Naive thymus-derived CD4-positive, alpha-beta T cell (primary cell): ENCODE measurements at regions of chr7 and their contacts with region 1.

Region 1: DNA sequence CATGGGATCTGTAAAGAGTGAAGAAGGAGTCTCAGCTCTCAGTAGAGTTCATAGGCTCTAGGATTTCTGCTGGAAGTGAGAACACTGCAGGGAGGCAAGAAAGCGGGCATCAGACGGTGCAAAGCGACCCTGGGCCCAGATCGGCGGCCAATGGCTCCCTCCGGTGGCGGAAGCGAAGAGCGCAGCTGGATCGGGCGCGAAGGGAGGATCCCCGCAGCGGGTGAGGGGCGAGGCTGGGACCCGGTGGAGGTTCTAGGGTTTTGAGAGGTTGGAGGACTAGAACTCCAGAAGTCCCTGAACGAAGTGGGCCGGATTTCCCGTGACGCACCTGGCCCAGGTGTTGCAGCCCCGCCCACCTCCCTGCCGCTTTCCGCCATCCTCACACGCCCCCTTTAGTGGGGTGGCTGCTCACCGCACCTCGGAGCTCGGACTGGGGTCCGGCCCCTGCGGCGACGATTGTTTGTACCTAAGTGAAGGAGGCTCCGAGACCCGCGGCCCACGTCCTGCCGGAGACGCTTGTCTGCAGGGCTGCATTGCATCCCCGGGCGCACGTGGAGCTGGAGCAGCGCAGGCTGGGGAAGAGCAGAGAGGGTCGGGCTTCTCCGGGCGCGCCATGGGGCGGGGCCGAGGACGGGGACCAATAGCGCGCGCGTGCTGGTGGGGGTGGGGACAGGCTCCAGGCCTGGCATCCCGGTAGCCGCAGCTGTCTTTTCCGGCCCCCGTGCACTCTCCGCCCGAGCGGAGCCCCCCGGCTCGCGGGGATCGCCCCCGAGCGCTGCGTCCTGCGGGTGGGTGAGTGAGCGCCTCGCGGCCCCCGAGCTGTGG is at the start of gene SLC12A9:
- DNase-seq: peak; percentile 71 to 90 (median 85)
- ATAC-seq: peak; percentile 96
- H3K4me3 ChIP-seq: peak within 1 kb of the TSS; percentile 73
- H3K4me3 Mint-ChIP-seq: peak within 1 kb of the TSS; percentile 89 to 95 (median 92)
- H3K27ac ChIP-seq: peak within 1 kb of the TSS; percentile 76
- H3K27ac Mint-ChIP-seq: peak within 1 kb of the TSS; percentile 71 to 97 (median 90)
- H3K4me1 ChIP-seq: peaks cover 8 to 16% of the 10 kb centered on the region in 2 donors
- H3K4me1 Mint-ChIP-seq: peaks cover 0 to 31% (median 19%) of the 10 kb centered on the region in 7 donors
- H3K27me3 ChIP-seq: no peaks in the 10 kb centered on the region
- H3K27me3 Mint-ChIP-seq: no peaks in the 10 kb centered on the region
- total RNA-seq, gene SLC12A9: 50.4 to 78.6 (median 62.7) TPM

Region 2: GRCh38 chr7:99997545-99998137 is 854.6 kb before region 1 on chr7:
- CTCF ChIA-PET with region 1: no interaction called
- POLR2A ChIA-PET with region 1: no interaction called
- intact Hi-C with region 1: no loop called
- DNase-seq: peak; percentile 55 to 76 (median 72)
- ATAC-seq: peak; percentile 96
- H3K4me3 ChIP-seq: peak overlapping the region; percentile 43
- H3K4me3 Mint-ChIP-seq: peak overlapping the region; percentile 71 to 85 (median 76)
- H3K27ac ChIP-seq: peak overlapping the region; percentile 71
- H3K27ac Mint-ChIP-seq: peak overlapping the region; percentile 57 to 95 (median 87)
- H3K4me1 ChIP-seq: peaks cover 7 to 11% of the 10 kb centered on the region in 2 donors
- H3K4me1 Mint-ChIP-seq: peaks cover 7 to 21% (median 18%) of the 10 kb centered on the region in 7 donors
- H3K27me3 ChIP-seq: no peaks in the 10 kb centered on the region
- H3K27me3 Mint-ChIP-seq: peaks cover 0 to 3% (median 0%) of the 10 kb centered on the region in 5 donors

Region 3: GRCh38 chr7:100604028-100604975 is 248.0 kb before region 1 on chr7:
- CTCF ChIA-PET with region 1: no interaction called
- POLR2A ChIA-PET with region 1: no interaction called
- intact Hi-C with region 1: loop called in 1 of 2 experiments (anchors 2 kb)
- DNase-seq: peak in 8 of 9 donors; percentile 47 to 81 (median 59)
- ATAC-seq: peak; percentile 81
- H3K4me3 ChIP-seq: peak overlapping the region; percentile 70
- H3K4me3 Mint-ChIP-seq: peak overlapping the region; percentile 79 to 94 (median 87)
- H3K27ac ChIP-seq: peak overlapping the region; percentile 67
- H3K27ac Mint-ChIP-seq: peak overlapping the region; percentile 21 to 92 (median 84)
- H3K4me1 ChIP-seq: peaks cover 6 to 10% of the 10 kb centered on the region in 2 donors
- H3K4me1 Mint-ChIP-seq: peaks cover 7 to 35% (median 16%) of the 10 kb centered on the region in 7 donors
- H3K27me3 ChIP-seq: no peaks in the 10 kb centered on the region
- H3K27me3 Mint-ChIP-seq: peaks cover 0 to 15% (median 0%) of the 10 kb centered on the region in 5 donors

Region 4: GRCh38 chr7:100726996-100727761 is 125.1 kb before region 1 on chr7:
- CTCF ChIA-PET with region 1: no interaction called
- POLR2A ChIA-PET with region 1: no interaction called
- intact Hi-C with region 1: loop called in 1 of 2 experiments (anchors 1 kb)
- DNase-seq: no peak
- ATAC-seq: no peak
- H3K4me3 ChIP-seq: no peak overlapping the region
- H3K4me3 Mint-ChIP-seq: no peak overlapping the region
- H3K27ac ChIP-seq: no peak overlapping the region
- H3K27ac Mint-ChIP-seq: peak overlapping the region in 1 of 9 donors; percentile 22
- H3K4me1 ChIP-seq: no peaks in the 10 kb centered on the region
- H3K4me1 Mint-ChIP-seq: peaks cover 0 to 5% (median 0%) of the 10 kb centered on the region in 7 donors
- H3K27me3 ChIP-seq: peaks cover 0 to 4% of the 10 kb centered on the region in 2 donors
- H3K27me3 Mint-ChIP-seq: peaks cover 16 to 31% (median 21%) of the 10 kb centered on the region in 5 donors

Region 5: GRCh38 chr7:100837099-100837836 is 15.0 kb before region 1 on chr7:
- CTCF ChIA-PET with region 1: interaction called, 8 read pairs
- POLR2A ChIA-PET with region 1: interaction called, 3 read pairs
- intact Hi-C with region 1: loop called in 1 of 2 experiments (anchors 1 kb)
- DNase-seq: peak; percentile 42 to 65 (median 59)
- ATAC-seq: peak; percentile 97
- H3K4me3 ChIP-seq: peak overlapping the region; percentile 57
- H3K4me3 Mint-ChIP-seq: peak overlapping the region; percentile 80 to 90 (median 86)
- H3K27ac ChIP-seq: peak overlapping the region; percentile 59
- H3K27ac Mint-ChIP-seq: peak overlapping the region; percentile 64 to 92 (median 77)
- H3K4me1 ChIP-seq: no peaks in the 10 kb centered on the region
- H3K4me1 Mint-ChIP-seq: peaks cover 5 to 19% (median 16%) of the 10 kb centered on the region in 7 donors
- H3K27me3 ChIP-seq: no peaks in the 10 kb centered on the region
- H3K27me3 Mint-ChIP-seq: no peaks in the 10 kb centered on the region

Region 6: DNA sequence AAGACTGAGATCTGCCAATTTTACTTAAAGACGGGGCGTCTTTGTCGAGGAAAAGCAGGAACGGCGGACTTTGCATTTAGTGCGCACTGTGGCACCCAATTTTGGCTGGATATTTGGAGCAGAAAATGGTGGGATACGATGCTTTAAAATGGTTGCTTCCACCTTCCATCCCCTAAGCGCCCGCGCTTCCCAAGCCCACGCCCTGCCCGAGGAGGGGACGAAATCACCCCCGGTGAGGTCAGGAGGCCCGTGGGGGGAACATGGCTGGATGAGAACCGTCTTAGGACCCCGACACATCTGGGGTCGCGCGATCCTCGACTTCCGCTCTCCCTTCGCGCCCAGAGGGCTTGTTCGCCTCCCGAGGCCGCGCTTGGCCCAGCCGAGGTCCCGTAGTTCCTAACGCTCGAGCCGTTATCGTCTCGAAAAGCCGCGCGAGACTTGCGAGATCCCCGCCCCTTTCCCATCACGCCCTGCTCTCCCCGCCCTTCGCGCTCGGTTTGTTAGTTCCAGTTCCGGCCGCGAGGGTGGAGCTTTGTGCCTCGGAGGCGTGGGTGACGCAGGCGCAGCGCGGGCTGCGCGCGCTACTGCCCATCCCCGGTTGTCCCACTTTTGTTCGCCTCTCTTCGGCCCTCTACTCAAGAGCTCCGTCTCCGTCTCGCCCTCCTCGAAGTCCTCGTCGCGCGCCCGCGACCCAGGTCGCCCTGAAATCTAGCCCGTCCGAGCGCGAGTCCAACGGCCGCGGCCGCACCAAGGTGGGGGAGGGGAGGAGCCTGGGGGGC is 22.5 kb after region 1 on chr7 and contains the start of gene SRRT:
- CTCF ChIA-PET with region 1: interaction called, 3 read pairs
- POLR2A ChIA-PET with region 1: interaction called, 22 read pairs
- intact Hi-C with region 1: loop called (anchors 1 to 2 kb)
- DNase-seq: peak; percentile 92 to 99 (median 97)
- ATAC-seq: peak; percentile 98
- H3K4me3 ChIP-seq: peak within 1 kb of the TSS; percentile 78
- H3K4me3 Mint-ChIP-seq: peak within 1 kb of the TSS; percentile 96 to 100 (median 98)
- H3K27ac ChIP-seq: peak within 1 kb of the TSS; percentile 94
- H3K27ac Mint-ChIP-seq: peak within 1 kb of the TSS; percentile 97 to 99 (median 98)
- H3K4me1 ChIP-seq: peaks cover 22 to 30% of the 10 kb centered on the region in 2 donors
- H3K4me1 Mint-ChIP-seq: peaks cover 27 to 55% (median 52%) of the 10 kb centered on the region in 7 donors
- H3K27me3 ChIP-seq: no peaks in the 10 kb centered on the region
- H3K27me3 Mint-ChIP-seq: no peaks in the 10 kb centered on the region
- total RNA-seq, gene SRRT: 212 to 271 (median 261) TPM